ENCODE measurements at regions of chr13 and their contacts with region 1.

Region 1: GRCh38 chr13:41456768-41457588 is at the start of gene RGCC:
- DNase-seq: peak; percentile 63
- ATAC-seq: peak; percentile 77
- H3K4me3 Mint-ChIP-seq: peak within 1 kb of the TSS; percentile 75
- H3K27ac Mint-ChIP-seq: no peak within 1 kb of the TSS
- H3K4me1 Mint-ChIP-seq: peaks cover 25% of the 10 kb centered on the region
- H3K27me3 Mint-ChIP-seq: peaks cover 35% of the 10 kb centered on the region
- CTCF ChIP-seq: no peak
- total RNA-seq, gene RGCC: 2.4 and 2.7 TPM in 2 replicates

Region 2: DNA sequence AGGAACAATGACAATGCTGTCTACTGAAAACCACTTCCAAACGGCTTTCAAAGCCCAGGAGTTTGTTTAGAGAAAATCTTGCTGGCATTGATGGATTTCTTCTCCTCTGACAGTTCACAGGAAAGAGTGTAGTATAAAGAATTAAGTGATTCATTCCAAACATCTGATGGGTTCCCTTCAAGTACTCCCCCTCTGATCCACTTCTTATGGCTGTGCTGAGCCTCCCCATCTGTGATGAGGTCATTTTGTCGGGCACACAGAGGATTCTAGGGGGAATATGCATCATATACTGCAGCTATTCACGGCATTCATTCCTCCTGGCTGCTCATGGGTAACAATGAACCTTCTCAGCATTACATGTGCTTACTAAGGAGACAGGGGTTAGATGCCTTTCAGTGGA is 108.2 kb after region 1 on chr13:
- CTCF ChIA-PET with region 1: no interaction called
- POLR2A ChIA-PET with region 1: no interaction called
- intact Hi-C with region 1: loop called (anchors 5 kb)
- DNase-seq: no peak
- ATAC-seq: no peak
- H3K4me3 Mint-ChIP-seq: no peak overlapping the region
- H3K27ac Mint-ChIP-seq: no peak overlapping the region
- H3K4me1 Mint-ChIP-seq: no peaks in the 10 kb centered on the region
- H3K27me3 Mint-ChIP-seq: no peaks in the 10 kb centered on the region
- CTCF ChIP-seq: no peak

Region 3: GRCh38 chr13:41588899-41589298 is 131.9 kb after region 1 on chr13:
- CTCF ChIA-PET with region 1: interaction called, 3 read pairs
- POLR2A ChIA-PET with region 1: no interaction called
- intact Hi-C with region 1: loop called (anchors 5 kb)
- DNase-seq: no peak
- ATAC-seq: no peak
- H3K4me3 Mint-ChIP-seq: no peak overlapping the region
- H3K27ac Mint-ChIP-seq: no peak overlapping the region
- H3K4me1 Mint-ChIP-seq: peaks cover 12% of the 10 kb centered on the region
- H3K27me3 Mint-ChIP-seq: no peaks in the 10 kb centered on the region
- CTCF ChIP-seq: no peak

Region 4: DNA sequence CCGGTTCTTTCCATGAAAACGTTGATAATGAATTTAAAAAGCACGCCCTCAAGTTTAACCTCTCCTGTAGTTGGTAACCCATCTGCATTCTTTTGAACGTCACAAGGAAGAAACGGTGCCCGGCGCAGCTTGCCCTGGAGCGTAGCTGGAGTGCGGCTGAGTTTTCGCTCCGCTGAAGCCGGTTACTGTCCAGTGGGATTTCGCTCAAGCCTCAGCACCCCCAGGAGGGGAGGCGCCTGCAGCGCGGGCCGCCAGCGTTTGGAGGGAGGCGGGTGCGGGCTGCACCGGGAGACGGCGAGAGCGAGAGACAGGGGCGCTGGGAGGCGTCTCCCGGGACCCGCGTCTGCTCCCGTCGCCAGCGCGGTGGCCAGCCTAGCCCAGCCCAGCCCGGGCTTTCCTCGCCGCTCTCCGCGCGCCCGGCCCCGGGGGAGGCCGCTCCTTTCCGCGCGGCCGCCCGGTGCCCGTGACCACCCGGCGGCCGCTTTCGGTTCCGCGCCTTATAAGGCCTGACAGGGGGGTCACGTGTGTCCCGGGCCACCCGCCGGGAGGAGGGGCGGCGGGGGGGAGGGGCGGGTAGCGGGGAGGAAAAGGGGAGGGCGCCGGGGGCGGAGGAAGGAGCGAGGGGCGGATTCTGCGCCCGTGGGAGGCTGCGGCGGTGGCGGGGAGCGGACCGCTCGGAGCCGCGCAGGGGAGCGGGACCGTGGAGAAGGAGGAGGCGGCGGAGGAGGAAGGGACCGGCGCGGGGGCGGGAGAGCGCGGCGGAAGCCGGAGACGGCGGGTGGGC is 583.2 kb after region 1 on chr13:
- CTCF ChIA-PET with region 1: no interaction called
- POLR2A ChIA-PET with region 1: no interaction called
- intact Hi-C with region 1: loop called (anchors 2 kb)
- DNase-seq: peak; percentile 78
- ATAC-seq: peak; percentile 82
- H3K4me3 Mint-ChIP-seq: peak overlapping the region; percentile 90
- H3K27ac Mint-ChIP-seq: peak overlapping the region; percentile 84
- H3K4me1 Mint-ChIP-seq: peaks cover 16% of the 10 kb centered on the region
- H3K27me3 Mint-ChIP-seq: peaks cover 6% of the 10 kb centered on the region
- CTCF ChIP-seq: no peak

Region 5: GRCh38 chr13:42048682-42049453 is 591.9 kb after region 1 on chr13:
- CTCF ChIA-PET with region 1: no interaction called
- POLR2A ChIA-PET with region 1: no interaction called
- intact Hi-C with region 1: loop called (anchors 2 kb)
- DNase-seq: peak; percentile 50
- ATAC-seq: peak; percentile 76
- H3K4me3 Mint-ChIP-seq: peak overlapping the region; percentile 85
- H3K27ac Mint-ChIP-seq: no peak overlapping the region
- H3K4me1 Mint-ChIP-seq: peaks cover 12% of the 10 kb centered on the region
- H3K27me3 Mint-ChIP-seq: peaks cover 34% of the 10 kb centered on the region
- CTCF ChIP-seq: no peak

Measured in activated B cell treated with CpG ODN at 0.5 μM for 24 hours (primary cell).